Left ventricle myocardium inferior (tissue), 1 donor: ENCODE measurements at regions of chr1 and their contacts with region 1.

Region 1: GRCh38 chr1:21368515-21369289 is 71.2 kb upstream of the NBPF3 start:
- DNase-seq: peak; percentile 76
- H3K4me3 ChIP-seq: no peak overlapping the region
- H3K27ac ChIP-seq: no peak overlapping the region
- H3K4me1 ChIP-seq: peaks cover 8% of the 10 kb centered on the region
- H3K27me3 ChIP-seq: no peaks in the 10 kb centered on the region
- CTCF ChIP-seq: peak; percentile 100

Region 2: DNA sequence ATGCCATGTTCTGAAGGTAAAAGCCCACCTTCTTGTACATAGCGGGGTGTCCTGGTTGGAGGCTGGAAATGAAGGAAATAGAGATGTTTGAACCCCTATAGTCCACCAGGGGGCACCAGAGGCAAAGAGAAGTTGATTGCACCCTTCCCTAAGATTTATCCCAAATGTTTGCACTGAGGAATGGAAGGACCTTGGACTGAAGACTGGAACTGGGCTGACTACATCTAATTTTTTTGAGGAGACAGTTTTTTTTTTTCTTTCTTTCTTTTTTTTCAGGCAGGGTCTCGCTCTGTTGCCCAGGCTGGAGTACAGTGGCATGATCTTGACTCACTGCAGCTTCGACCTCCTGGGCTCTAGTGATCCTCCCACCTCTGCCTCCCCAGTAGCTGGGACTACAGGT is 136.7 kb before region 1 on chr1:
- intact Hi-C with region 1: loop called (anchors 2 kb)
- DNase-seq: no peak
- H3K4me3 ChIP-seq: no peak overlapping the region
- H3K27ac ChIP-seq: no peak overlapping the region
- H3K4me1 ChIP-seq: peaks cover 24% of the 10 kb centered on the region
- H3K27me3 ChIP-seq: no peaks in the 10 kb centered on the region
- CTCF ChIP-seq: peak; percentile 82